A673 (cell line): ENCODE measurements at regions of chr17 and their contacts with region 1.

Region 1: DNA sequence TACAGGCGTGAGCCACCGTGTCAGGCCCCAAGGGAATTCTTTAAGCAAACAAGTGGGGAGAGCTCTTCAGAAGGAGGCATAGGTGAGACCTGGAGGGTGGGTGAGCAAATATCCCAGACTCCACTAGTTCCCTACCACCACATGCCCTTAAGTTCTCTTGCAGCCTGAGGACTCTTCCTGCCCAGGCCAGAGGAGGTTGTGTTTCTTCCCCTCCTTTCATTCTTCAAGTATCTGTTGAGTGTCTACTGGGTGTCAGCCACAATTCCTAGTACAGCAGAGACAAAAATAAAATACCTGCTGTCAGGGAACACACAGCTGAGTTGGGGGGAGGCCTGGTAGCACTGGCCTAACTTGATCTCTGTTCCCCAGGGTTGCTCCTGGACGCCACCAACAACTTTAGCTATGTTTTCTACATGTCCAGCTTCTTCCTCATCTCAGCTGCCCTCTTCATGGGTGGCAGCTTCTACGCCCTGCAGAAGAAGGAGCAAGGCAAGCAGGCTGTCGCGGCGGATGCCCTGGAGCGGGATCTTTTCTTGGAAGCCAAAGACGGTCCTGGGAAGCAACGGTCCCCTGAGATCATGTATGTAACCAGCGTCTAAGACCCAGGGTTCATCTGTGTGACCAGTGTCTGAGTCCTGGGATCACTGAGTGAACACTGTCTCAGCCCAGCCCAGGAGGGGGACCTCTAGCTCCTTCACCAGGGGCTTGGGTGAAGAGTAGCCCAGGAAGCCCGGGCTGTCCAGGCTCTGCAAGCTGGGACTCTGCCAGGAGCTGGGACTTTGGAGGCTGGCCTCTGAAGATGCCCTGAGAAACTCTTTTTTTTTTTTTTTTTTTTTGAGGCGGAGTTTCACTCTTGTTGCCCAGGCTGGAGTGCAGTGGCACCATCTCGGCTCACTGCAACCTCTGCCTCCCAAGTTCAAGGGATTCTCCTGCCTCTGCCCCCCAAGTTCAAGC is 5.9 kb upstream of the ARMC7 start:
- DNase-seq: no peak
- H3K4me3 ChIP-seq: no peak overlapping the region
- H3K27ac ChIP-seq: no peak overlapping the region
- H3K4me1 ChIP-seq: peaks cover 10% of the 10 kb centered on the region
- H3K27me3 ChIP-seq: no peaks in the 10 kb centered on the region
- CTCF ChIP-seq: no peak

Region 2: GRCh38 chr17:75371339-75371738 is 267.5 kb after region 1 on chr17:
- CTCF ChIA-PET with region 1: interaction called, 12 read pairs
- POLR2A ChIA-PET with region 1: no interaction called
- intact Hi-C with region 1: no loop called
- DNase-seq: no peak
- H3K4me3 ChIP-seq: no peak overlapping the region
- H3K27ac ChIP-seq: no peak overlapping the region
- H3K4me1 ChIP-seq: no peaks in the 10 kb centered on the region
- H3K27me3 ChIP-seq: no peaks in the 10 kb centered on the region
- CTCF ChIP-seq: no peak